Transverse colon (tissue), 4 donors: ENCODE measurements at regions of chr3 and their contacts with region 1.

Region 1: GRCh38 chr3:9362731-9363530 is at the start of gene THUMPD3:
- DNase-seq: peak; percentile 90
- H3K4me3 ChIP-seq: peak within 1 kb of the TSS; percentile 50 to 90 (median 56)
- H3K27ac ChIP-seq: peak within 1 kb of the TSS; percentile 87 to 93 (median 92)
- H3K4me1 ChIP-seq: peaks cover 4 to 23% (median 21%) of the 10 kb centered on the region in 4 donors
- H3K27me3 ChIP-seq: no peaks in the 10 kb centered on the region
- CTCF ChIP-seq: no peak
- EP300 ChIP-seq: no peak
- POLR2A ChIP-seq: peak; percentile 79
- total RNA-seq, gene THUMPD3: 5.4 to 26.9 (median 19.4) TPM

Region 2: DNA sequence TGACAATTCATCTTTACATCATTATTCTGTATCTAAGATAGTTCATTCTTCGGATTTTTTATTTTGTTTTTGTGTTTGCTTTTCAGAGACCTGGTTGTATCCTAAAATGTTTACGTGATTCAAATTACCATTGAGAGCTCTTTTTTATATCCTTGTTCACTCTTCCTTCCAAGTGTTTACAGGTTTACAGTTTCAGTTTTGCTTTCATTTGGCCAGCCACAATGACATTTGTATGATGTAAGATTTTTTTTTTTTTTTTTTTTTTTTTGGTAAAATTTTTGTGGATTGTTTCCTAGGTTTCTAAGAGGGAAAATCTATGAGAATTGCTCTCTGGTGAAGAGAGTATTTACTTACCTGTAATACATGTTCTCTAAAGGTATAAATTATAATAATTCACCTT is 89.5 kb after region 1 on chr3:
- in situ Hi-C with region 1: loop called in 2 of 4 experiments (anchors 25 kb)
- intact Hi-C with region 1: no loop called
- DNase-seq: no peak
- H3K4me3 ChIP-seq: no peak overlapping the region
- H3K27ac ChIP-seq: peak overlapping the region in 1 of 4 donors; percentile 7
- H3K4me1 ChIP-seq: peaks cover 0 to 12% (median 2%) of the 10 kb centered on the region in 4 donors
- H3K27me3 ChIP-seq: no peaks in the 10 kb centered on the region
- CTCF ChIP-seq: no peak
- EP300 ChIP-seq: no peak
- POLR2A ChIP-seq: no peak

Region 3: GRCh38 chr3:9649791-9650521 is 287.0 kb after region 1 on chr3:
- in situ Hi-C with region 1: loop called in 1 of 4 experiments (anchors 25 kb)
- intact Hi-C with region 1: no loop called
- DNase-seq: no peak
- H3K4me3 ChIP-seq: peak overlapping the region; percentile 78 to 100 (median 98)
- H3K27ac ChIP-seq: peak overlapping the region; percentile 87 to 91 (median 90)
- H3K4me1 ChIP-seq: peaks cover 6 to 19% (median 7%) of the 10 kb centered on the region in 4 donors
- H3K27me3 ChIP-seq: no peaks in the 10 kb centered on the region
- CTCF ChIP-seq: no peak
- EP300 ChIP-seq: no peak
- POLR2A ChIP-seq: no peak